HEK293 (cell line): ENCODE measurements at regions of chr3 and their contacts with region 1.

Region 1: GRCh38 chr3:52220380-52221026 is 4.9 kb downstream of the TLR9 start:
- H3K4me3 ChIP-seq: no peak overlapping the region
- H3K27ac ChIP-seq: no peak overlapping the region
- H3K4me1 ChIP-seq: no peaks in the 10 kb centered on the region
- CTCF ChIP-seq: peak; percentile 58

Region 2: GRCh38 chr3:52070724-52071621 is 149.5 kb before region 1 on chr3:
- CTCF ChIA-PET with region 1: no interaction called
- POLR2A ChIA-PET with region 1: no interaction called
- H3K4me3 ChIP-seq: no peak overlapping the region
- H3K27ac ChIP-seq: no peak overlapping the region
- H3K4me1 ChIP-seq: no peaks in the 10 kb centered on the region
- CTCF ChIP-seq: no peak

Region 3: DNA sequence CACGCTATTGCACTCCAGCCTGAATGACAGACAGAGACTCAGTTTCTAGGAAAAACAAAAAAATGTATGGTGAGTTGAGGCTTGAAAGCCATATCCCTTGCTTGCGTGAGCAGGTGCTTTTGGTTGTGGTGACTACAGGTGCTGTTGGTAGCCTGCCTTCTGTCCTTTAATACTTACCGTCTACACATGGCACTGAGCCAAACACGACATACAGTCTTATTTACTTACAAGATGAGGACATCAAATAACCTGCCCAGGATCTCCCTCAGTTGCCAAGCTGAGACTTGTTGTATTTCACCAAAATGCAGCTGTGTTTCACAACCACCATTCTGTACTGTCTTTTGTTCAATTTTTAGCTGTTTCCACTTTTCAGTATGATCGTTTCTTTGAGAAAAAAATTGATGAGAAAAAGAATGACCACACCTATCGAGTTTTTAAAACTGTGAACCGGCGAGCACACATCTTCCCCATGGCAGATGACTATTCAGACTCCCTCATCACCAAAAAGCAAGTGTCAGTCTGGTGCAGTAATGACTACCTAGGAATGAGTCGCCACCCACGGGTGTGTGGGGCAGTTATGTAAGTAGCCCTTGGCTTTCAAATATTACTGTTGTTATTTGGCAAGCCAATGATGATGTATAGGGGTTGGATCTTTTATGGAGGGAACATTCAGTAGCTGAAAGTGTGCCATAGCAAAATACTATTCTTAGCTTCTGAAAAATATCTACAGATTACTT is 16.0 kb before region 1 on chr3:
- CTCF ChIA-PET with region 1: interaction called, 20 read pairs
- POLR2A ChIA-PET with region 1: no interaction called
- H3K4me3 ChIP-seq: no peak overlapping the region
- H3K27ac ChIP-seq: peak overlapping the region; percentile 17; the same call in 1 of the 2 replicates
- H3K4me1 ChIP-seq: no peaks in the 10 kb centered on the region
- CTCF ChIP-seq: no peak

Region 4: DNA sequence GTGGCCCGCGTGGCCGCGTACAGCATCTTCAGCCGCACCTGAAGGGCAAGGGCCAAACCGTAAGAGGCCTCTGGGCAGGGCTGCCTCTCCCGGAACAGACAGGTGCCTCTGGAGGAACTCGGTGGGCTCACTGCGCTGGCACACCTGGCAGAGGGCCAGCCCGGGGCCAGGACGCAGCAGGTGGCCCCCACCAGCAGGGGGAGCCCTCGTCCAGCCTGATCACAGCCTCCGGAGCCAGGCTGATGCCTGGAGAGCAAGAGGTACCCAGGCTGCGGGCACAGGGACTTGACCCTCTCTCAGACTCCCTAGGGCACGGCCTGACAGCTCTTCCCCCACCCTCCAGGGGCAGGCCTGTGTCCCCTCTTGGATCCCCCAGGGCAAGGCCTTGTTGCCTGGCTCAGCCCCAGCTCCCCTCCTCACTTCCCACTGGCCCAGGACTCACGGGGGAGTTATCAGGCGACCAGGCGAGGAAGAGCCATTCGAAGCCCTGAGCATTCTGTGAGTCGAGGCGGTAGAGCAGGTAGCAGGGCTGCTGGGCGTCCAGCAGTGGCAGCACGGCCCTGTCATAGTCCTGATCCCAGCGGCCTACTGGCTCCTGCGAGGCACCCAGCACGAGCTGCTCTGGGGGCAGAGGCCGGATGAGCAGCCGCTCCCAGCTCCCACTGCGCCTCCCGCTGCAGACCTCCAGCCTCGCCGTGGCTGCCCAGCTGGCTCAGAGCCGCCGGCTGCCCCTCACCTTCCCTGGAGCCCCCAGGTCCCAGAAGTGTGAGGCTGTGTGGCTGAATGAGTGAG is 11.2 kb after region 1 on chr3:
- CTCF ChIA-PET with region 1: interaction called, 39 read pairs
- POLR2A ChIA-PET with region 1: interaction called, 3 read pairs
- H3K4me3 ChIP-seq: no peak overlapping the region
- H3K27ac ChIP-seq: no peak overlapping the region
- H3K4me1 ChIP-seq: no peaks in the 10 kb centered on the region
- CTCF ChIP-seq: peak; percentile 87

Region 5: GRCh38 chr3:52238761-52239701 is 18.5 kb after region 1 on chr3 and contains the start of gene TWF2:
- CTCF ChIA-PET with region 1: interaction called, 11 read pairs
- POLR2A ChIA-PET with region 1: interaction called, 3 read pairs
- H3K4me3 ChIP-seq: peak within 1 kb of the TSS; percentile 95
- H3K27ac ChIP-seq: peak within 1 kb of the TSS; percentile 73; the same call in 1 of the 2 replicates
- H3K4me1 ChIP-seq: no peaks in the 10 kb centered on the region
- CTCF ChIP-seq: peak; percentile 82

Region 6: DNA sequence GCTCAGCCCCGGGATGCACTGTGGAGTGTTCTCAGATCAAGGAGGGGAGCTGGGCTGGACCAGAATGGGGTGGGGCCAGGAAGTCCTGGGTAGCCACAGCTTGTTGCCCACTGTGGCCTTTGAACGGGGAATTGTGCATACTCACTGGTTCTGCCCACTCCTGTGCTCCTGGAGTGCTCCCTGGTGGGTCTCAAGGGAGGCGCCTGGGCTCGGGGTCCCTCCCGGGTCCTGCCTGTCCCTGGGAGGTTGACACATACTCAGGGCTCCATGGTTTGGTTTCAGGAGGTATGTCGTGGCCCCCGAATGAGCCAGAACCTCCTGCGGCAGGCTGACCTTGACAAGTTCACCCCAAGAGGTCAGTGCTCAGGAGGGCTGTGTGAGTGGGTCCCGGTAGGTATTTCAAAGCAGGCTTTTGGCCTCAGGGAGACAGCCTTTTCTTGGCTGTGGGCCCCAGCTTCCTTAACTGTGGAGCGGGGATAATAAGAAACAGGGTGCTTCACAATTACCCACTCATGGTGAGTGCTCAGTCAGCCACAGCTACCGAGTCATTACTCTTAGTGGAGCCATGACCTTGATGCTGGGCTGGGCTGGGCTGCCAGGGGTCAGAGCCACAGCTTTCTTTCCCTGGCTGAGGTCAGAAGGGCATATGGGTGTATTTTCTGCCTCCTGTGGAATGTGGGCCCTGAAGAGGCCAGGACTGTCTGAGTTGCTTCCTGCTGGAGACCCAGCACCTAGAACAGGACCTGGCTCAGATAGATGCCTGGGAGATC is 103.2 kb after region 1 on chr3:
- CTCF ChIA-PET with region 1: no interaction called
- POLR2A ChIA-PET with region 1: no interaction called
- H3K4me3 ChIP-seq: no peak overlapping the region
- H3K27ac ChIP-seq: no peak overlapping the region
- H3K4me1 ChIP-seq: no peaks in the 10 kb centered on the region
- CTCF ChIP-seq: no peak

Region 7: DNA sequence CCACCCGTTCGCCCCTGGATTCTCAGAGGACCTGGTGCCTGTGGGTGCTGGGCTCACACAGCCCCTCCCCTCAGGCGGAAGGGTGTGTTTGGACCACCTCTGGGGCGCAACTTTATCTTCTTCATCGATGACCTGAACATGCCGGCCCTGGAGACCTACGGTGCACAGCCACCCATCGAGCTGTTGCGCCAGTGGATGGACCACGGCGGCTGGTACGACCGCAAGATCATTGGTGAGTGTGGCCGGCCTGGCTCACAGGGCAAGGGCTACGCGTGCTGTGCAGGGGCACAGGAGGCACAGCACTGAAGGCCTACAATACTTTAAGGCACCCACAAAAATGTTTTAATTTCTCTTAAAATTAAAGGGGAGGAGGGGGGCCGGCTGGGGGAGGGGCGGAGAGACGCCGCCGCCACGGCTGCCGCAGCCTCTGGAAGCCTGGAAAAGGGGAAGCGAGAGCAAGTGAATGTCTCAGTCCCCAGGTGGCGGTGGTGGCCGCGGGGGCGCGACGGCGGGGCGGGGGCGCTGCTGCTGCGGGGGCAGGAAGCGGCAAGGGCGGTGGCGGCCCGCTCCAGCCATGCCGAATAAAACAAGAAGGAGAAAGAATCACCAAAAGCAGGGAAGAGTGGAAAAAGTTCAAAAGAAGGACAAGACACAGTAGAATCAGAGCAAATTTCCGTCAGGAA is 152.5 kb after region 1 on chr3:
- CTCF ChIA-PET with region 1: no interaction called
- POLR2A ChIA-PET with region 1: no interaction called
- H3K4me3 ChIP-seq: no peak overlapping the region
- H3K27ac ChIP-seq: no peak overlapping the region
- H3K4me1 ChIP-seq: no peaks in the 10 kb centered on the region
- CTCF ChIP-seq: no peak

Region 8: DNA sequence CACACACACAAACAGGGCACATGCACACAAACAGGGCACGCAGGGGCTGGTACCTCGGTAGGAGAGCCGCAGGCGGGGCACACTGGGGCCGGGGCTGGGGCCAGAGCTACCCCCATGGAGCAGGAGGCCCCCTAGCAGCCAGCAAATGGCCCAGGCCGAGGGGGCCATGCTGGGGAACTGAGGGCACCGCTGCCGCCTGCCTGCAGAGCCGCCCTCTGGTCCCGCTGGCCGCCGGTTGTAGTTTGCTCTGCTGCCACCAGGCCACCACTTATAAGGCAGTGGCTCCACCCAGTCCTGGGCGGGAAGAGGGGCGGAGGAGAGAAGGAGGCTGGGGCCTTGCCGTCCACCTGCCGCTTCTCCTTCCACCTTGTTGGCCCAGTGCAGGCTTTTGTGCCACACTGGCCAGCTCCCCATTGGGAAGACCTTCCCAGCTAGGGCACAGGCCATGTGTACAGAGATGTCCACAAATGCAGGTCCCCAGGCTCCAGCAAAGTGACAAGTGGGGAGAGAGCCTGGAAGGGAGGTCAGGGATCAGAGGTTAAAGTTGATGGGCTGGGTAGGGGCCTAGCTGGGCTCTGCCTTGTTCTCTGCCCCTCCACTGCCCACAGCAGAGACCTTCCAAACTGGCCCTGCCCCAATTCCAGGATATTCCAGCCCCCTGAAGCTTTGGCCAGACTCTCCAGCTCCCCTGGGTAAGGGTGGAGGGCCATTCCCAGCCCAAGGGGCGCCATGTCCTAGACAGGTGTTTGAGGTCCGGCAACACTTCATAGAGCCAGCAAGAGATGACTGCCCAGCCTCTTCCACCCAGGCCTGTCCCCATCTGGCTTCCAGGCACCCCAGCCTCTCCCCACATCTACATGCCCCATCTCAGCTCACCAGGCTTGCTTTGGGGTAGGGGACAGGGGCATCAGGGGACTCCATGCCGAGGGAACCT is 224.6 kb after region 1 on chr3 and contains the start of gene SEMA3G:
- CTCF ChIA-PET with region 1: interaction called, 11 read pairs
- POLR2A ChIA-PET with region 1: no interaction called
- H3K4me3 ChIP-seq: no peak within 1 kb of the TSS
- H3K27ac ChIP-seq: no peak within 1 kb of the TSS
- H3K4me1 ChIP-seq: no peaks in the 10 kb centered on the region
- CTCF ChIP-seq: peak; percentile 64